ENCODE measurements at regions of chr12 and their contacts with region 1.

Region 1: GRCh38 chr12:13573698-13574321 is 377.3 kb downstream of the EMP1 start:
- DNase-seq: peak; percentile 82
- H3K4me3 ChIP-seq: no peak overlapping the region
- H3K27ac ChIP-seq: peak overlapping the region; percentile 2
- H3K4me1 ChIP-seq: peaks cover 22% of the 10 kb centered on the region
- H3K27me3 ChIP-seq: no peaks in the 10 kb centered on the region
- CTCF ChIP-seq: no peak

Region 2: DNA sequence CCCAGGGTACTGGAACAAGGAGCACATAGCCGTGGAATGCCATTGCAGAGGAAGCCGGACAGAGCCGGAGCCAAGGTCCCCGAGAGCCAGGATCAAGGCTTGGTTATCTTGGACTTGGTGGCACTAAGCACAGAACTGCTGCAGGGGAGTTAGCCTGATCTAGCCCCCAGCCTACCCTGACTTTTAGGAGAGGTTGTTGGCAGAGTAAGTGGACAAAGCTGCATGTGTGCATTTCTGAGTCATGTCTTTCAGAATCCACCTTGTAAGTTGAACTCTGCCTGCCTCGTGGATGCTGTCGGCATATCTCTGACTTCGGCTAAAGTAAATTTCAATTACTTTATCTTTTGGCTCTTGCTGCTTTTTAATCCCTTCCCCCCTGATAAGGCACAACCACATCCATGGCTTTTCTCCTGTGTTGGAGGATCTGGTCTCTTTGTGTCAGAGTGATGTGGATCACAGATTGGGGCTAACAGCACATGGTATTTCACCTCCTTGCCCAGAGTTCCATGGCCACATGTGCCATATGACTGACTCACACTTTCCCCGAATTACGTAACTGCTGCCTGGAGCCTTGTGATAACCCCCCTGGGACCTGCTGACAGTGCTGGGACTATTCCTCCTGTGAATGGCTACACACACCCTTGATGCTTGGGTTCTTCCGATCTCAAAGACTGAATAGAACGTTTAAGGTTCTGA is 137.0 kb before region 1 on chr12:
- CTCF ChIA-PET with region 1: no interaction called
- dilution Hi-C with region 1: no loop called
- in situ Hi-C with region 1: no loop called
- intact Hi-C with region 1: no loop called
- DNase-seq: peak; percentile 12
- H3K4me3 ChIP-seq: no peak overlapping the region
- H3K27ac ChIP-seq: no peak overlapping the region
- H3K4me1 ChIP-seq: no peaks in the 10 kb centered on the region
- H3K27me3 ChIP-seq: no peaks in the 10 kb centered on the region
- CTCF ChIP-seq: no peak

Region 3: GRCh38 chr12:13478650-13479181 is 95.1 kb before region 1 on chr12:
- CTCF ChIA-PET with region 1: no interaction called
- dilution Hi-C with region 1: no loop called
- in situ Hi-C with region 1: no loop called
- intact Hi-C with region 1: no loop called
- DNase-seq: no peak
- H3K4me3 ChIP-seq: no peak overlapping the region
- H3K27ac ChIP-seq: no peak overlapping the region
- H3K4me1 ChIP-seq: no peaks in the 10 kb centered on the region
- H3K27me3 ChIP-seq: peaks cover under 1% of the 10 kb centered on the region
- CTCF ChIP-seq: no peak

Region 4: GRCh38 chr12:13534645-13535398 is 39.0 kb before region 1 on chr12:
- CTCF ChIA-PET with region 1: no interaction called
- dilution Hi-C with region 1: no loop called
- in situ Hi-C with region 1: no loop called
- intact Hi-C with region 1: no loop called
- DNase-seq: peak; percentile 21
- H3K4me3 ChIP-seq: no peak overlapping the region
- H3K27ac ChIP-seq: no peak overlapping the region
- H3K4me1 ChIP-seq: no peaks in the 10 kb centered on the region
- H3K27me3 ChIP-seq: no peaks in the 10 kb centered on the region
- CTCF ChIP-seq: peak; percentile 98

Region 5: GRCh38 chr12:13652105-13652504 is 78.3 kb after region 1 on chr12:
- CTCF ChIA-PET with region 1: no interaction called
- dilution Hi-C with region 1: no loop called
- in situ Hi-C with region 1: no loop called
- intact Hi-C with region 1: loop called (anchors 10 kb)
- DNase-seq: no peak
- H3K4me3 ChIP-seq: no peak overlapping the region
- H3K27ac ChIP-seq: no peak overlapping the region
- H3K4me1 ChIP-seq: no peaks in the 10 kb centered on the region
- H3K27me3 ChIP-seq: peaks cover 2% of the 10 kb centered on the region
- CTCF ChIP-seq: no peak